Naive thymus-derived CD4-positive, alpha-beta T cell (primary cell): ENCODE measurements at regions of chr4 and their contacts with region 1.

Region 1: DNA sequence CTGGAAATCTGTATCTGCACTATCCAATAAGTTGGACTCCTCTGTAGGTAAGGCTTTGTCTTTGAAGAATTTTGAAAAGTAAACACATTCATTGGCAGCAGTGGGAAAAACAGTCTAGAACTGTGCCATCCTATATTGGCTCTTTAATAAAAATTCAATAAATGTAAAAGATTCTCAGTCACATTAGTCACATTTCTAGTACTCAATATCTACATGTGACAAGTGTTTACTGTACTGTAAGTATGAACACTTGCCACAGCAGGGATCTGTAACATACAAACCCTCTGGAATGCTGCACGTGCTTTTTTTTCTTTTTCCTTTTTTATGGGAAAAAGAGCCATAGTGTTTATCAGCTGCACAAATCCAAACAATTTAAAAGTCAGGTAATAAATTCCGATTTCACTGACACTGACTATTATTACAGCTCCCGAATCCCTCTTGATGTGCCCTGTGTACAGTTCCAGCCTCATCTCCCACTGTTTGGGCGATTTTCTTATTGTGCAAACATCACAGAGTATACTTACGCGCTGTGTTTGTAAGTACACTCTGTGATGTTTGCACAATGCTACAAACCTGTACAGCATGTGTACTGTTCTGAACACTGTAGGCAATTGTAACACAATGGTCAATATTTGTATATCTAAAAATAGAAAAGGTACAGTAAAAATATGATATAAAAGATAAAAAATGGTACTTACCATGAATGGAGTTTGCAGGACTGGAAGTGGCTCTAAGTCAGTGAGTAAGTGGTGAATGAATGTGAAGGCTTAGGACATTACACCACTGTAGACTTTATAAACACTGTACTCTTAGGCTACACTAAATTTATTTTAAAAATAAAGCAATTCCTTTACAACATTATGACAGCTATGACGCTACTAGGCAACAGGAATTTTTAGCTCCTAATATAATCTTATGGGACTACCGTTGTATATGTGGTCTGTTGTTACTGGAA is 8.7 kb downstream of the PYURF start:
- DNase-seq: no peak
- ATAC-seq: no peak
- H3K4me3 ChIP-seq: no peak overlapping the region
- H3K4me3 Mint-ChIP-seq: no peak overlapping the region
- H3K27ac ChIP-seq: no peak overlapping the region
- H3K27ac Mint-ChIP-seq: no peak overlapping the region
- H3K4me1 ChIP-seq: no peaks in the 10 kb centered on the region
- H3K4me1 Mint-ChIP-seq: no peaks in the 10 kb centered on the region
- H3K27me3 ChIP-seq: no peaks in the 10 kb centered on the region
- H3K27me3 Mint-ChIP-seq: peaks cover 0 to 8% (median 0%) of the 10 kb centered on the region in 5 donors

Region 2: DNA sequence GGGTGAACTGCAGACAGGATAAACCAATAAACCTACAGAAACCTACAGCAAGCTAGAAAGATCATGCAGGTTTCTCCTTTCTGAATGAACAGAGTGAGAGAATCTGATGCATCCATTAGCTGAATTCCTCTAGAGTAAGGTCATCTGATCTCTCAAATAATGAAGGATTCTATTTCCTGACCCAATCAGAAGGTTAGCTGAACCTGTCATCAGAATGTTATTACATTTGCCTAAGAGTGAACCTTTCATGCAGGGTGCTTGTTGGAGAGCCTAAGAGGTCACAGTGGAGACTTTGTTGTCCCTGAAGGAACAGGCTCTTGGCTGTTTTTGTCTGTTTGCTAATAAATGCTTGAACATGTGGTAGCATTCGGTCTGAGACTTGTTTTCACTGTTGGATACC is 658.0 kb before region 1 on chr4:
- CTCF ChIA-PET with region 1: no interaction called
- POLR2A ChIA-PET with region 1: no interaction called
- intact Hi-C with region 1: loop called (anchors 2 to 5 kb)
- DNase-seq: no peak
- ATAC-seq: no peak
- H3K4me3 ChIP-seq: no peak overlapping the region
- H3K4me3 Mint-ChIP-seq: no peak overlapping the region
- H3K27ac ChIP-seq: no peak overlapping the region
- H3K27ac Mint-ChIP-seq: no peak overlapping the region
- H3K4me1 ChIP-seq: no peaks in the 10 kb centered on the region
- H3K4me1 Mint-ChIP-seq: no peaks in the 10 kb centered on the region
- H3K27me3 ChIP-seq: no peaks in the 10 kb centered on the region
- H3K27me3 Mint-ChIP-seq: peaks cover 15 to 30% (median 27%) of the 10 kb centered on the region in 5 donors

Region 3: DNA sequence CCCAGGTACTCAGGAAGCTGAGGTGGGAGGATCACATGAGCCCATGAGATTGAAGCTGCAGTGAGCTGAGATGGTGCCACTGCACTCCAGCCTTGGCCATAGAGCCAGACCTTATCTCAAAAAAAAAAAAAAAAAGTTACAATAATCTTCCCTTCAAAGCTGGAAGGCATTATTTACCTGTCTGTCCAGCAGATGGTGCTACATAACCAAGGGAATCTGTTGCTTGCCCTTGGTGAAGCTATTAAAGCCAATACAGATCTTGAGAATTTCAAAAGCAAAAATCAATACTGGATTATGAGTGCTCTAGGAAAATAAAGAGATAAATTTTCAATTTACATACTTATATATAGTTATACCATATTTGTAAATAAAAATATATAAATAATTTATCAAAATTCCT is 481.5 kb before region 1 on chr4:
- CTCF ChIA-PET with region 1: interaction called, 3 read pairs
- POLR2A ChIA-PET with region 1: no interaction called
- intact Hi-C with region 1: loop called (anchors 1 kb)
- DNase-seq: peak in 7 of 9 donors; percentile 19 to 57 (median 32)
- ATAC-seq: peak; percentile 75
- H3K4me3 ChIP-seq: no peak overlapping the region
- H3K4me3 Mint-ChIP-seq: no peak overlapping the region
- H3K27ac ChIP-seq: no peak overlapping the region
- H3K27ac Mint-ChIP-seq: no peak overlapping the region
- H3K4me1 ChIP-seq: no peaks in the 10 kb centered on the region
- H3K4me1 Mint-ChIP-seq: peaks cover 0 to 3% (median 0%) of the 10 kb centered on the region in 7 donors
- H3K27me3 ChIP-seq: no peaks in the 10 kb centered on the region
- H3K27me3 Mint-ChIP-seq: no peaks in the 10 kb centered on the region

Region 4: GRCh38 chr4:88077911-88078524 is 436.8 kb before region 1 on chr4:
- CTCF ChIA-PET with region 1: no interaction called
- POLR2A ChIA-PET with region 1: no interaction called
- intact Hi-C with region 1: no loop called
- DNase-seq: no peak
- ATAC-seq: no peak
- H3K4me3 ChIP-seq: no peak overlapping the region
- H3K4me3 Mint-ChIP-seq: no peak overlapping the region
- H3K27ac ChIP-seq: no peak overlapping the region
- H3K27ac Mint-ChIP-seq: no peak overlapping the region
- H3K4me1 ChIP-seq: no peaks in the 10 kb centered on the region
- H3K4me1 Mint-ChIP-seq: no peaks in the 10 kb centered on the region
- H3K27me3 ChIP-seq: no peaks in the 10 kb centered on the region
- H3K27me3 Mint-ChIP-seq: no peaks in the 10 kb centered on the region

Region 5: GRCh38 chr4:88211473-88212252 is 303.2 kb before region 1 on chr4:
- CTCF ChIA-PET with region 1: interaction called, 16 read pairs
- POLR2A ChIA-PET with region 1: no interaction called
- intact Hi-C with region 1: no loop called
- DNase-seq: peak in 7 of 9 donors; percentile 28 to 65 (median 55)
- ATAC-seq: peak; percentile 60
- H3K4me3 ChIP-seq: no peak overlapping the region
- H3K4me3 Mint-ChIP-seq: no peak overlapping the region
- H3K27ac ChIP-seq: no peak overlapping the region
- H3K27ac Mint-ChIP-seq: no peak overlapping the region
- H3K4me1 ChIP-seq: no peaks in the 10 kb centered on the region
- H3K4me1 Mint-ChIP-seq: peaks cover 0 to 7% (median 4%) of the 10 kb centered on the region in 7 donors
- H3K27me3 ChIP-seq: no peaks in the 10 kb centered on the region
- H3K27me3 Mint-ChIP-seq: peaks cover 0 to 21% (median 0%) of the 10 kb centered on the region in 5 donors

Region 6: GRCh38 chr4:88217920-88218319 is 296.9 kb before region 1 on chr4:
- CTCF ChIA-PET with region 1: interaction called, 47 read pairs
- POLR2A ChIA-PET with region 1: no interaction called
- intact Hi-C with region 1: loop called (anchors 1 kb)
- DNase-seq: no peak
- ATAC-seq: no peak
- H3K4me3 ChIP-seq: no peak overlapping the region
- H3K4me3 Mint-ChIP-seq: no peak overlapping the region
- H3K27ac ChIP-seq: no peak overlapping the region
- H3K27ac Mint-ChIP-seq: no peak overlapping the region
- H3K4me1 ChIP-seq: no peaks in the 10 kb centered on the region
- H3K4me1 Mint-ChIP-seq: peaks cover 5 to 9% (median 7%) of the 10 kb centered on the region in 7 donors
- H3K27me3 ChIP-seq: no peaks in the 10 kb centered on the region
- H3K27me3 Mint-ChIP-seq: peaks cover 0 to 14% (median 0%) of the 10 kb centered on the region in 5 donors

Region 7: GRCh38 chr4:88369936-88370335 is 144.9 kb before region 1 on chr4:
- CTCF ChIA-PET with region 1: interaction called, 8 read pairs
- POLR2A ChIA-PET with region 1: no interaction called
- intact Hi-C with region 1: loop called (anchors 1 kb)
- DNase-seq: no peak
- ATAC-seq: no peak
- H3K4me3 ChIP-seq: no peak overlapping the region
- H3K4me3 Mint-ChIP-seq: no peak overlapping the region
- H3K27ac ChIP-seq: no peak overlapping the region
- H3K27ac Mint-ChIP-seq: no peak overlapping the region
- H3K4me1 ChIP-seq: no peaks in the 10 kb centered on the region
- H3K4me1 Mint-ChIP-seq: peaks cover 0 to 22% (median 0%) of the 10 kb centered on the region in 7 donors
- H3K27me3 ChIP-seq: no peaks in the 10 kb centered on the region
- H3K27me3 Mint-ChIP-seq: peaks cover 0 to 3% (median 0%) of the 10 kb centered on the region in 5 donors

Region 8: GRCh38 chr4:88573276-88573980 is 58.6 kb after region 1 on chr4:
- CTCF ChIA-PET with region 1: no interaction called
- POLR2A ChIA-PET with region 1: no interaction called
- intact Hi-C with region 1: no loop called
- DNase-seq: no peak
- ATAC-seq: no peak
- H3K4me3 ChIP-seq: no peak overlapping the region
- H3K4me3 Mint-ChIP-seq: no peak overlapping the region
- H3K27ac ChIP-seq: no peak overlapping the region
- H3K27ac Mint-ChIP-seq: no peak overlapping the region
- H3K4me1 ChIP-seq: no peaks in the 10 kb centered on the region
- H3K4me1 Mint-ChIP-seq: no peaks in the 10 kb centered on the region
- H3K27me3 ChIP-seq: no peaks in the 10 kb centered on the region
- H3K27me3 Mint-ChIP-seq: peaks cover 0 to 9% (median 8%) of the 10 kb centered on the region in 5 donors

Region 9: GRCh38 chr4:88583631-88584475 is 69.0 kb after region 1 on chr4:
- CTCF ChIA-PET with region 1: no interaction called
- POLR2A ChIA-PET with region 1: no interaction called
- intact Hi-C with region 1: no loop called
- DNase-seq: no peak
- ATAC-seq: no peak
- H3K4me3 ChIP-seq: no peak overlapping the region
- H3K4me3 Mint-ChIP-seq: no peak overlapping the region
- H3K27ac ChIP-seq: no peak overlapping the region
- H3K27ac Mint-ChIP-seq: no peak overlapping the region
- H3K4me1 ChIP-seq: no peaks in the 10 kb centered on the region
- H3K4me1 Mint-ChIP-seq: peaks cover 0 to 2% (median 0%) of the 10 kb centered on the region in 7 donors
- H3K27me3 ChIP-seq: no peaks in the 10 kb centered on the region
- H3K27me3 Mint-ChIP-seq: peaks cover 0 to 6% (median 0%) of the 10 kb centered on the region in 5 donors